ENCODE measurements at regions of chr15 and their contacts with region 1.

Region 1: DNA sequence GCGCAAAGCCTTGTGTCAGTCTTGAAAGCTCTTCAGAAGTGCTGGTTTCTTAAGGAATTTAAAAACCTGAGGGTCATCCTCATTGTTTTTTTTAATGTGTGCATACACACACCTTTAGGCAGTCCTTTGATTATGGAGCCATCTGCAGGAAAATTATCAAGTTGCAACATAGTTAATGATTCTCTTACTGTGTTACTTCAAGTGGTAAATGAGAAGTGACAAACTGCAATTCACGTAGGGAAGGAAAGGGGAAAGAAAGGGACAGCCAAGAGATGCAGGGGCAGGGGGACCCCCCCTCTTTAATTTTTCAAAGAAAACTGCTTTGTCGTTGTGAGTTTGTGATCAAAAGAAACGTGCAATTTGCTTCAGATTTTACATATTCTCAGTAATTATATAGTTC is 162.4 kb upstream of the CGNL1 start:
- DNase-seq: no peak
- ATAC-seq: peak; percentile 79
- H3K4me3 ChIP-seq: no peak overlapping the region
- H3K27ac ChIP-seq: no peak overlapping the region
- H3K4me1 ChIP-seq: peaks cover 36% of the 10 kb centered on the region
- H3K27me3 ChIP-seq: no peaks in the 10 kb centered on the region
- CTCF ChIP-seq: peak; percentile 56

Region 2: DNA sequence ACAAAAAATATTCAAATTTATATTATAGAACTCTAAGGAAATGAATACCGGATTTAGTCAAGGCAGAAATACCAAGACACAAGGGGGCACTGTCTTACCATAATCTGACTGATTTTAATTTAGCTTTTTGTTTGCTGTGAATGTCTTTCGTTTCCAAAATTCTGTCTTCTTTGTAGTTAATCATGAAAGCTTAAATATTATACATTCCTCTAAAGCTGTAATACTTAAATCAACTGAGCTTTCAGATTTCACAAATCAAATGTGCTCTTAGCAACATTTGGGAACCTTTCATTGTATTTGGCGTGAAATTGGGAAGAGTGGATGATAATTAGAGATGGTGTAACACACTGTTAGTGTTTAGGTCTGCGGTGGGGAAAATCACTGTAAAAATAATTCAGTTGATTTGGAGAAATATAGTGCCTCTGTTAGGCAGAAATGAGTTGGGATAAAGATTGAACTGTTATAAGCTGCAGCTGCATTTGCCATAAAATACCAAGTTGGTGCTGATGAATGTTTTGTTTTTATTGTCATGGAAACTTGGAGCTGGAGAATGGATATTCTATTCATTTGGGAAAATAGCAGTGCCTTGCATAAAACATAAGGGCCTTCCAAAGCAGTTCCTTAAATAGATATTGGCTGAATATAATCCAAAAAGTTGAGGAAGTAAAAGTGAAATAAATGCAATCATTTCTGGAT is 67.2 kb before region 1 on chr15:
- intact Hi-C with region 1: loop called (anchors 10 kb)
- DNase-seq: no peak
- ATAC-seq: peak; percentile 60
- H3K4me3 ChIP-seq: no peak overlapping the region
- H3K27ac ChIP-seq: no peak overlapping the region
- H3K4me1 ChIP-seq: peaks cover 32% of the 10 kb centered on the region
- H3K27me3 ChIP-seq: no peaks in the 10 kb centered on the region
- CTCF ChIP-seq: peak; percentile 80

Region 3: GRCh38 chr15:57337868-57338411 is 124.1 kb after region 1 on chr15:
- intact Hi-C with region 1: no loop called
- DNase-seq: peak; percentile 63
- ATAC-seq: peak; percentile 3
- H3K4me3 ChIP-seq: no peak overlapping the region
- H3K27ac ChIP-seq: peak overlapping the region; percentile 42
- H3K4me1 ChIP-seq: no peaks in the 10 kb centered on the region
- H3K27me3 ChIP-seq: no peaks in the 10 kb centered on the region
- CTCF ChIP-seq: peak; percentile 23

Measured in upper lobe of right lung (tissue), 1 donor.